ENCODE measurements at regions of chr3 and their contacts with region 1.

Region 1: GRCh38 chr3:99875929-99876841 is 58.5 kb downstream of the CMSS1 start:
- DNase-seq: peak; percentile 81 to 88 (median 85)
- ATAC-seq: peak; percentile 94
- H3K4me3 ChIP-seq: peak overlapping the region; percentile 23
- H3K4me1 ChIP-seq: peaks cover 9% of the 10 kb centered on the region
- CTCF ChIP-seq: no peak

Region 2: DNA sequence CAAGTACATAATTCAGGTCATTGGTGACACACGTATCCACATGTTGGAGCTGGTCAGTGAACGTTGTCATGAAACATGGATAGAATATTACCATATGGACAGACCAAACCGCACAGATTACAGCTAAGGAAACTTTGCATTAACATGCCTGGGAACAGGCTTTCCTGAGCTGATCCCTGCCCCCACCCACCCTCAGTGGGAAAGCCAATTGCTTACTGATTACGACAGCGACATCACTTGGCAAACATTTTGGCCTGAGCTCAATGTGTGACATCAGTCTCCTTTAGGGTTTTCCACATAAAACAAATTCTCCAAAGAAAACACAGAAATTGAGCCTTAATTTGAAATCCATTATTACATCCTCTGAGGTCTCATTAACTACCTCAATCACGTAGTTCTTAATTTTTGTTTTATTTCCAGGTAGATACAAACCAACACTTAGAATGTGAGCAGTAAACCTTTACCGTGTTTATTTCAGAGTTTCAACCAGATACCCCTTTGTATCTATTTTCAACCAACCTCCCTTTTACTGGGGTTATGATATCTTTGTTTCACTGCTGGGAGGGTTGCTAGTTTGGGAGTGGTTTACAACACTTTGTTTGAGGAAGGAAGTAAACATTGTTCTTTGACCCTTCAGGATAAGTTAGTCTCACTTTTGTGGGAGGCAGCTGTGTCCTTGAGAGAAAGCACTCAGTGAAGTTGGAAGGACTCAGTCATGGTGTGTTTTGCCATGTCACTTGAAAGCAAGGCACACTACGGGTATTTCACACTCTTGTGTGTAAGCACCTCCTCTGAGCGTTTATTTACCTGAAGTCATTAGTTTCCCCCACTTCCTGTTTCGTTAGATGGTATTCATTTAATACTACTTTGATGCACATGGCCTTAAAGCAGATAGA is 44.5 kb after region 1 on chr3:
- intact Hi-C with region 1: loop called in 1 of 2 experiments (anchors 10 kb)
- DNase-seq: peak; percentile 66 to 85 (median 73)
- ATAC-seq: peak; percentile 94
- H3K4me3 ChIP-seq: no peak overlapping the region
- H3K4me1 ChIP-seq: peaks cover 37% of the 10 kb centered on the region
- CTCF ChIP-seq: no peak